ENCODE measurements at regions of chr7 and their contacts with region 1.

Region 1: DNA sequence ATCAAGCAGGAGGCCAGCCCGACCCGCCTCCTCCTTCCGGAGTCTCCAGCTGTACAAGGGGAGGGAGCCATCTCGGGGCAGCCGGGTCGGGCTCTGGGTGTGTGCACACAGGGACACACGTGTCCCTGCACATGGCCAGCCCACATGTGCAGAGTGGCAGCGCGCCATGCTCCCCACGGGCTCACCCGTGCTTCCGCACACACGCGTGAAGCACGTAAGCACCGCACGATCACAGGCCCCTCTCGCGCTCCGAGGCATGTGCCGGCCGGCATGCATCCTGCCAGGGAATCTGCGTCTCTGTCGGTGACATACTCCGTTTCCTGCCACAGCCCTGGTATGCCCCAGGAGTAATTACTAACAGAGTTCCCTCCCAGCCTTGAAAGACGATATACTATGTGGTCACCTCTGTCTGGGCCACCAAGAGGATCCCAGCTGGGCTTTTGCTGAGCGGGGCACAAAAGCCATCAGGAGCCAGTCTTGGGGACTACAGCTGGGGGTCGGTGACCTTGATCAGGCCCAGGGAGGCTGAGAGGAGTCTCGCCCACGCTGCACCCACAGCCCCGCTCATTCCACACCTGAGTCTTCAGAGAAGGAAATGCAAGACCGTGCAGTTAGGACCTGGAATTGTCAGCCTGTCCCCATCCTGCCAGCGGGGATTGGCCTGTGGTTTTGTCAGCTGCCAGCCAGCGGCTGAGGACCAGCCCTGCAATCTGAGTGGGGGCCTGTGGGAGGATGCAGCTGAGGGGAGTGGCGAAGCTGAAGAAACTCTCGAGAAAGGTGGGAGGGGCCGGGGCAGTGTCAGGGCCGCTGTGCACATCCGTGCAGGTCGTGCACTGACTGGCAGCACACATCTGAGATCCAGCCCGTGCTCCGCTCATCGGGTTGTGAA is 11.0 kb upstream of the LFNG start:
- DNase-seq: peak; percentile 85 to 96 (median 90)
- H3K4me3 ChIP-seq: peak overlapping the region; percentile 31 to 39
- H3K4me3 Mint-ChIP-seq: peak overlapping the region; percentile 74 to 87 (median 81)
- H3K27ac ChIP-seq: peak overlapping the region; percentile 73
- H3K27ac Mint-ChIP-seq: peak overlapping the region; percentile 95 to 99 (median 98)
- H3K4me1 ChIP-seq: peaks cover 61% of the 10 kb centered on the region
- H3K4me1 Mint-ChIP-seq: peaks cover 29 to 63% (median 50%) of the 10 kb centered on the region in 4 donors
- H3K27me3 ChIP-seq: no peaks in the 10 kb centered on the region
- H3K27me3 Mint-ChIP-seq: no peaks in the 10 kb centered on the region

Region 2: DNA sequence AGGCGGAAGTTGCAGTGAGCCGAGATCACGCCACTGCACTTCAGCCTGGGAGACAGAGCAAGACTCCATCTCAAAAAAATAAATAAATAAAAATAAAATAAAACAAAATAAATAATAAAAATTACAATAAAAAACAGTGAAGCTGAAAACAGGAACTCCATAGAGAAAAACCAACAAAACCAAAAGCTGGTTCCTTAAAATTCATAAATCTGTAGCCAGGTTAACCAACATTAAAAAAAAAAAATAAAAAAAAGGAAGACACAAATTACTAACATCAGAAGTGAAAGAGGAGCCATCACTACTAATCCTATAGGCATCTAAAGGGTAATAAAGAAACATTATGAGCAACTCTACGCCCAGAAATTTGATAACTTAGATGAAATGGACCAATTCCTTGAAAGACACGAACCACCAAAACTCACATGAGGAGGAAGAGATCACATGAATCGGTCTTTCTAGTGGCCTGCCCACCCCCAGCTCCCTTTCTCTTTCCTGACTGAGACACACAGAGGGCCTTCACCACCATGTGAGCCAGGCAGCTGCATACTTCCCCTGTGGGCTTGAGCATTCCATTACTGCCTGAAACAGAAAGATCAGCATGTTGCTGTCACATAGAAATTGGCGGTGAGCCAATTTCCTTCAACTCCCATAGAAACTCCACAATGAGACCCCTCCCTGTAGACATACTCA is 484.5 kb before region 1 on chr7:
- CTCF ChIA-PET with region 1: no interaction called
- POLR2A ChIA-PET with region 1: no interaction called
- intact Hi-C with region 1: no loop called
- DNase-seq: no peak
- H3K4me3 ChIP-seq: no peak overlapping the region
- H3K4me3 Mint-ChIP-seq: no peak overlapping the region
- H3K27ac ChIP-seq: no peak overlapping the region
- H3K27ac Mint-ChIP-seq: no peak overlapping the region
- H3K4me1 ChIP-seq: no peaks in the 10 kb centered on the region
- H3K4me1 Mint-ChIP-seq: peaks cover 5 to 16% (median 8%) of the 10 kb centered on the region in 4 donors
- H3K27me3 ChIP-seq: no peaks in the 10 kb centered on the region
- H3K27me3 Mint-ChIP-seq: no peaks in the 10 kb centered on the region

Region 3: DNA sequence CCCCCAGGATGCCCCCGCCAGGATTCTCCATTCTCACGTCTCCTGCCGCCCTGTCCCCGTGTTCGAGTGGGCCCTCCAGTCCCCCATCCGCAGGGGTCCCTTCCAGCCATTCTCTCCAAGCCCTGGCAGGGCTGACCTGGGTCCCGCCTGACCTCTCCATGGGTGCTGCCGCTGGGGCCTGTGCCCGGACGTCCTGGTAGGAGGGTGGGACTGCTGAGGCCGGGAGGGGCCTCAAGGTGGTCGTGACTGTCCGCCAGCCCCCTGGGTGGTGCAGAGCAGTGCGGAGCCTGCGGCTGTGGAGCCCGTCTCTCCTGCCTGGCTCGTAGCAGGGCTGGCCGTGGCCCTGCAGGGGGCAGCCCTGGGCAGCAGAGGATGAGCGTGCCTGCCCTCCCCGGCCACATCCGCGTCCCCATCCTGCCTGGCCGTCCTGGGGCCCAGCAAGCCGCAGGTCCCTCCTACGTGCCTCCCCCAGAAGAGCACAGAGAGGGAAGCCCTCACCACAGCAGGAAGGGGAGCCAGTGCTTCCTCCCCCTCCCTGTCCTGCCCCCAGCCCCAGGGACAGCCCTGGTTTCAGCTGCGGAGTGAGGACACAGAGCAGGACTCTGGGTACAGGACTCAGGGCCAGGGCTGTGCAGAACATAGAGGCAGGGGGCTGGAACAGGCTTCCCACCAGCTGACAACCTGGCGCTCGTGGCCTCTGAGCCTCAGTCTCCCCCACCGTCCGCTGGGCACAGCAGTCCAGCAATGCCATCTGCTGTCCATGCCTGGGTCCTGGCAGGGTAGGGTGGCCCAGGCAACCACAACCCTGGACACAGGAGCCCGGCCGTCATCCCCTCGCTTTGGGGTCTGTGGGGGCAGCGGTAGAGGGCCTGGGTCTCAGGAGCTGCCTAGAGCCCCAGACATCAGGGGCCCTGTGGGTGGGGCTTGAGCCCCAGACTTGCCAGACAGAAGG is 30.8 kb before region 1 on chr7:
- CTCF ChIA-PET with region 1: interaction called, 4 read pairs
- POLR2A ChIA-PET with region 1: interaction called, 11 read pairs
- intact Hi-C with region 1: no loop called
- DNase-seq: peak; percentile 54 to 69 (median 64)
- H3K4me3 ChIP-seq: no peak overlapping the region
- H3K4me3 Mint-ChIP-seq: peak overlapping the region in 2 of 8 donors; percentile 22 to 31
- H3K27ac ChIP-seq: no peak overlapping the region
- H3K27ac Mint-ChIP-seq: no peak overlapping the region
- H3K4me1 ChIP-seq: peaks cover 13% of the 10 kb centered on the region
- H3K4me1 Mint-ChIP-seq: peaks cover 0 to 4% (median 0%) of the 10 kb centered on the region in 4 donors
- H3K27me3 ChIP-seq: no peaks in the 10 kb centered on the region
- H3K27me3 Mint-ChIP-seq: no peaks in the 10 kb centered on the region

Region 4: GRCh38 chr7:2519119-2519930 is 10.8 kb after region 1 on chr7 and contains the start of gene LFNG:
- CTCF ChIA-PET with region 1: interaction called, 3 read pairs
- POLR2A ChIA-PET with region 1: interaction called, 511 read pairs
- intact Hi-C with region 1: loop called (anchors 1 kb)
- DNase-seq: peak; percentile 77 to 86 (median 81)
- H3K4me3 ChIP-seq: peak within 1 kb of the TSS; percentile 93 to 98
- H3K4me3 Mint-ChIP-seq: peak within 1 kb of the TSS; percentile 97 to 99 (median 98)
- H3K27ac ChIP-seq: peak within 1 kb of the TSS; percentile 80
- H3K27ac Mint-ChIP-seq: peak within 1 kb of the TSS; percentile 89 to 99 (median 92)
- H3K4me1 ChIP-seq: peaks cover 37% of the 10 kb centered on the region
- H3K4me1 Mint-ChIP-seq: peaks cover 14 to 45% (median 25%) of the 10 kb centered on the region in 4 donors
- H3K27me3 ChIP-seq: no peaks in the 10 kb centered on the region
- H3K27me3 Mint-ChIP-seq: no peaks in the 10 kb centered on the region
- total RNA-seq, gene LFNG: 125 to 127 TPM

Region 5: GRCh38 chr7:2555121-2556052 is 46.8 kb after region 1 on chr7 and contains the start of gene BRAT1:
- CTCF ChIA-PET with region 1: interaction called, 4 read pairs
- POLR2A ChIA-PET with region 1: interaction called, 17 read pairs
- intact Hi-C with region 1: loop called (anchors 1 kb)
- DNase-seq: peak; percentile 91 to 95 (median 92)
- H3K4me3 ChIP-seq: peak within 1 kb of the TSS; percentile 52 to 82
- H3K4me3 Mint-ChIP-seq: peak within 1 kb of the TSS; percentile 84 to 91 (median 86)
- H3K27ac ChIP-seq: peak within 1 kb of the TSS; percentile 97
- H3K27ac Mint-ChIP-seq: peak within 1 kb of the TSS; percentile 81 to 92 (median 85)
- H3K4me1 ChIP-seq: peaks cover 49% of the 10 kb centered on the region
- H3K4me1 Mint-ChIP-seq: peaks cover 18 to 51% (median 31%) of the 10 kb centered on the region in 4 donors
- H3K27me3 ChIP-seq: no peaks in the 10 kb centered on the region
- H3K27me3 Mint-ChIP-seq: no peaks in the 10 kb centered on the region
- total RNA-seq, gene BRAT1: 37.0 to 41.4 TPM

Region 6: GRCh38 chr7:2844165-2844898 is 335.8 kb after region 1 on chr7 and contains the start of gene GNA12:
- CTCF ChIA-PET with region 1: no interaction called
- POLR2A ChIA-PET with region 1: no interaction called
- intact Hi-C with region 1: loop called (anchors 5 kb)
- DNase-seq: peak; percentile 97 to 98 (median 98)
- H3K4me3 ChIP-seq: peak within 1 kb of the TSS; percentile 51 to 61
- H3K4me3 Mint-ChIP-seq: peak within 1 kb of the TSS; percentile 84 to 97 (median 88)
- H3K27ac ChIP-seq: peak within 1 kb of the TSS; percentile 32
- H3K27ac Mint-ChIP-seq: peak within 1 kb of the TSS; percentile 53 to 90 (median 79)
- H3K4me1 ChIP-seq: peaks cover 19% of the 10 kb centered on the region
- H3K4me1 Mint-ChIP-seq: peaks cover 25 to 53% (median 40%) of the 10 kb centered on the region in 4 donors
- H3K27me3 ChIP-seq: no peaks in the 10 kb centered on the region
- H3K27me3 Mint-ChIP-seq: no peaks in the 10 kb centered on the region
- total RNA-seq, gene GNA12: 14.9 to 16.6 TPM